ENCODE measurements at regions of chr3 and their contacts with region 1.

Region 1: GRCh38 chr3:40317061-40317855 is 7.8 kb downstream of the EIF1B start:
- DNase-seq: peak; percentile 68
- H3K4me3 Mint-ChIP-seq: no peak overlapping the region
- H3K27ac Mint-ChIP-seq: no peak overlapping the region
- H3K4me1 Mint-ChIP-seq: peaks cover 5% of the 10 kb centered on the region
- H3K27me3 Mint-ChIP-seq: no peaks in the 10 kb centered on the region
- CTCF ChIP-seq: peak; percentile 73

Region 2: DNA sequence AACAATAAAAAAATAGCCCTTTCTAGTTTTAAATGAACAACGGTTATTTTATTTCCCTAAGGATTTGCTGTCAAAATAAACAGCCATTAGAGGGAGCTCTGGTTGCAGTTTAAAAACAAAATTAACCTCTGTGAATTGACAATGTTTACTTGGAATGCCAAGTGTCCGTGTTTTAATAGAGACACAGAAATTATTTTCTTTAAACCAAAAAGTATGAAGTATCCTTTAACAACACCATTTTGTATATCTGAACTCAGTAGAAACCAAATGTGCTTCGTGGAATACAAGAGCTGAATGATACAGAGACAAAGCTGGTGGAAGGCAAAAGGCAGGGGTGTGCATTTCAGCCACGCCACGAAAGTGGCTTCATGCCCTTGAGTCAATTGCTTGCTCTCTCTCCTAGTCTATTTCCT is 775.3 kb before region 1 on chr3:
- CTCF ChIA-PET with region 1: interaction called, 5 read pairs
- POLR2A ChIA-PET with region 1: no interaction called
- intact Hi-C with region 1: loop called (anchors 10 kb)
- DNase-seq: peak; percentile 49
- H3K4me3 Mint-ChIP-seq: no peak overlapping the region
- H3K27ac Mint-ChIP-seq: no peak overlapping the region
- H3K4me1 Mint-ChIP-seq: no peaks in the 10 kb centered on the region
- H3K27me3 Mint-ChIP-seq: no peaks in the 10 kb centered on the region
- CTCF ChIP-seq: peak; percentile 32

Region 3: GRCh38 chr3:39668420-39668819 is 648.8 kb before region 1 on chr3:
- CTCF ChIA-PET with region 1: no interaction called
- POLR2A ChIA-PET with region 1: no interaction called
- intact Hi-C with region 1: loop called (anchors 10 kb)
- DNase-seq: peak; percentile 73
- H3K4me3 Mint-ChIP-seq: no peak overlapping the region
- H3K27ac Mint-ChIP-seq: no peak overlapping the region
- H3K4me1 Mint-ChIP-seq: peaks cover 15% of the 10 kb centered on the region
- H3K27me3 Mint-ChIP-seq: no peaks in the 10 kb centered on the region
- CTCF ChIP-seq: peak; percentile 48

Region 4: DNA sequence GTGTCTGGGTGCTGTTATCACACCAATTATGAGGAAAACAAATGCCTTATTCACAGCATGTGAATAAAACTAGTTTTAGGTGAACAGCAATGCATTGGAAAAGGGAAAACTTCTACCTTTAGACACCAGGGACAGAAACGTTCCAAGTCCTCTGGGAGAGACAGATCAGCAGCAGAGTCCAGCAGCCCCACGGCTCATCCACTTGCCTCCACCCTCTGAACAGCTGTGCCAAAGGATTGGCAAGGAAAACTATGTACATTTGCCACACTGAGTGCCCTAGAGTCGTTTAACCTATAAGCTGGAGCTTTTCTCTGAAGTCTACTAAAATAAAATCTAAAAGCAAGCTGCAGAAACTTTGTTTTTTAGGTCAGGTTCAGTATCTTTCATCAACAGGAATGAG is 115.5 kb before region 1 on chr3:
- CTCF ChIA-PET with region 1: interaction called, 452 read pairs
- POLR2A ChIA-PET with region 1: no interaction called
- intact Hi-C with region 1: no loop called
- DNase-seq: no peak
- H3K4me3 Mint-ChIP-seq: no peak overlapping the region
- H3K27ac Mint-ChIP-seq: no peak overlapping the region
- H3K4me1 Mint-ChIP-seq: no peaks in the 10 kb centered on the region
- H3K27me3 Mint-ChIP-seq: no peaks in the 10 kb centered on the region
- CTCF ChIP-seq: no peak

Region 5: GRCh38 chr3:40329071-40329470 is 11.8 kb after region 1 on chr3:
- CTCF ChIA-PET with region 1: interaction called, 30 read pairs
- POLR2A ChIA-PET with region 1: no interaction called
- intact Hi-C with region 1: no loop called
- DNase-seq: no peak
- H3K4me3 Mint-ChIP-seq: no peak overlapping the region
- H3K27ac Mint-ChIP-seq: no peak overlapping the region
- H3K4me1 Mint-ChIP-seq: no peaks in the 10 kb centered on the region
- H3K27me3 Mint-ChIP-seq: no peaks in the 10 kb centered on the region
- CTCF ChIP-seq: no peak